ENCODE measurements at regions of chr1 and their contacts with region 1.

Region 1: GRCh38 chr1:3796215-3797061 is at the start of gene LRRC47:
- DNase-seq: peak; percentile 78 to 89
- H3K4me3 ChIP-seq: peak within 1 kb of the TSS; percentile 81
- H3K27ac ChIP-seq: no peak within 1 kb of the TSS
- H3K4me1 ChIP-seq: peaks cover 19% of the 10 kb centered on the region
- H3K27me3 ChIP-seq: 0 out of 2 replicates have a peak, but pooled peaks cover 3% of the 10 kb centered on the region
- CTCF ChIP-seq: no peak
- total RNA-seq, gene LRRC47: 34.2 and 35.5 TPM in 2 replicates

Region 2: DNA sequence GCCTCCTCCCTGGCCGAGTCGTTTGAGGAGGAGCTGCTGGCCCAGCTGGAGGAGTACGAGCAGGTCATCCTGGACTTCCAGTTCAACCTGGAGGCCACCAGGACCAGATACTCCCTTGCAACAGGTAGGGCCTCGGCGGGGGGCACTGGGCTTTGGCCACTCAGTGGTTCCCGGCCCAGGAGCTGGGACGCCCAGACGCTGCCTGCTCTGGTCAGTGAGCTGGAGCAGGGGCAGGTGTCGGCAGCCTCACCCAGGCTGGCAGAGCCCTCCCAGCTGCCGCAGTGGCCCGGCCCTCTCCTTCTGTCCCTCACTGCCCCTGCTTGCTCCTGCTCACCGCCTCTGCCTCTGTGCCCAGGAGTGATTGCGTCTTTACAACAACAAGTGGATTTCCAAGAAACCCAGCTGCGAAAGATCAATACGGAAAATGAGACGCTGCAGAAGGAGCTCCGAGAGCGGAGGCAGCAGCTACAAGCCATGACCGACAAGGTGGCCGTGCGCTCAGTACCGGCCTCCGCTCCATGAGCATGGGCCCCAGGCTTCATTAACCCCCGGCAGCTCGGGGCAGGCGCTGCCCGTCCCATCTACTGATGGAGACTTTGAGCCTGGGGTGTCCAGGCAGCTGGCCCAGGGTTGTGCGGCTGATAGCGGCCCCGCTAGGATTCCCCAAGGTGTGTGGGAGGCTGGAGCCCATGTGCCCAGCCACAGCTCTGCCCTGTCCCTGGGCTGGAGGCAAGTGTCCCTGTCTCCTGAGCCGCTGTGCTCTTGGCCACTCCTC is 32.9 kb before region 1 on chr1:
- CTCF ChIA-PET with region 1: no interaction called
- POLR2A ChIA-PET with region 1: no interaction called
- intact Hi-C with region 1: no loop called
- DNase-seq: no peak
- H3K4me3 ChIP-seq: no peak overlapping the region
- H3K27ac ChIP-seq: no peak overlapping the region
- H3K4me1 ChIP-seq: no peaks in the 10 kb centered on the region
- H3K27me3 ChIP-seq: peaks cover 92% of the 10 kb centered on the region
- CTCF ChIP-seq: no peak

Region 3: DNA sequence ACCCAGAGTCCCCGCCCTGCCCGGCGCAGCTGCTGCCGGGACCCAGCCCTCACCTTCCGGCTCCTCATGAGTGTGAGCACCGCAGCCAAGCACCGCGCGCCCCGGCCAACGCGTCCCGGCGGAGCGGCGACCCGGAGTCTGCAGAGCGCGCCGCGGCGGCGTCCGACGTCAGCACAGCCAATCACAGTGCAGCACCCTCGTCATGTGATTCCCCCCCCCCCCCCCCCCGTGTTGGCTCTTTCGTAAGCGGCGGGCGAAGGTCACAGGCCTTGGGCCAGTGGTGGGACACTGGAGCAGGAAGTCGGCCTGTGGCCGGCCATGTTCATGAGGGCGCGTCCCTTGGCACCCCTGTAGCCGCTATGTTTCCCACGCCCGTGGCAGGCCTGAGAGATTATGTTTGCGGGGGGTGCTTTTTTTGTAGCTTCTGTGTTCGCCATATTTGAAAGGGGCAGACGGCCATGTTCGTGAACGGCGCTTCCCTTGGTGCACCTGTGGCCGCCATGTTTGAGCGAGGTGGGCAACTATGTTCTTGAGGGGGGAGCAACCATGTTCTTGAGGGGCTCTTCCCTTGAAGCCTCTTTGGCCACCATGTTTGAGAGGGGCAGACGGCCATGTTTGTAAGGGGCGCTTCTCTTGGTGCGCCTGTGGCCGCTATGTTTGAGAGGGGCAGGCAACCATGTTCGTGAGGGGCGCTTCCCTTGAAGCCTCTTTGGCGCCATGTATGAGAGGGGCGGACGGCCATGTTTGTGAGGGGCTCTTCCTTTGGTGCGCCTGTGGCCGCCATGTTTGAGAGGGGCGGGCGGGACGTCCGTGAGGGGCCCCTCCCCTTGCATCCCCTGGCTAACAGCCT is 103.9 kb after region 1 on chr1 and contains the start of gene C1orf174:
- CTCF ChIA-PET with region 1: no interaction called
- POLR2A ChIA-PET with region 1: no interaction called
- intact Hi-C with region 1: loop called (anchors 10 kb)
- DNase-seq: peak; percentile 85 to 88
- H3K4me3 ChIP-seq: peak within 1 kb of the TSS; percentile 80
- H3K27ac ChIP-seq: peak within 1 kb of the TSS; percentile 98
- H3K4me1 ChIP-seq: peaks cover 14% of the 10 kb centered on the region; the same call in 1 of the 2 replicates
- H3K27me3 ChIP-seq: no peaks in the 10 kb centered on the region
- CTCF ChIP-seq: no peak
- total RNA-seq, gene C1orf174: 22.1 and 26.2 TPM in 2 replicates